ENCODE measurements at regions of chr19 and their contacts with region 1.

Region 1: GRCh38 chr19:18985257-18985656 is 44.2 kb upstream of the HOMER3 start:
- DNase-seq: peak in 1 of 2 donors; percentile 60
- ATAC-seq: no peak
- H3K4me3 ChIP-seq: no peak overlapping the region
- H3K27ac ChIP-seq: no peak overlapping the region
- H3K4me1 ChIP-seq: no peaks in the 10 kb centered on the region
- H3K27me3 ChIP-seq: no peaks in the 10 kb centered on the region

Region 2: DNA sequence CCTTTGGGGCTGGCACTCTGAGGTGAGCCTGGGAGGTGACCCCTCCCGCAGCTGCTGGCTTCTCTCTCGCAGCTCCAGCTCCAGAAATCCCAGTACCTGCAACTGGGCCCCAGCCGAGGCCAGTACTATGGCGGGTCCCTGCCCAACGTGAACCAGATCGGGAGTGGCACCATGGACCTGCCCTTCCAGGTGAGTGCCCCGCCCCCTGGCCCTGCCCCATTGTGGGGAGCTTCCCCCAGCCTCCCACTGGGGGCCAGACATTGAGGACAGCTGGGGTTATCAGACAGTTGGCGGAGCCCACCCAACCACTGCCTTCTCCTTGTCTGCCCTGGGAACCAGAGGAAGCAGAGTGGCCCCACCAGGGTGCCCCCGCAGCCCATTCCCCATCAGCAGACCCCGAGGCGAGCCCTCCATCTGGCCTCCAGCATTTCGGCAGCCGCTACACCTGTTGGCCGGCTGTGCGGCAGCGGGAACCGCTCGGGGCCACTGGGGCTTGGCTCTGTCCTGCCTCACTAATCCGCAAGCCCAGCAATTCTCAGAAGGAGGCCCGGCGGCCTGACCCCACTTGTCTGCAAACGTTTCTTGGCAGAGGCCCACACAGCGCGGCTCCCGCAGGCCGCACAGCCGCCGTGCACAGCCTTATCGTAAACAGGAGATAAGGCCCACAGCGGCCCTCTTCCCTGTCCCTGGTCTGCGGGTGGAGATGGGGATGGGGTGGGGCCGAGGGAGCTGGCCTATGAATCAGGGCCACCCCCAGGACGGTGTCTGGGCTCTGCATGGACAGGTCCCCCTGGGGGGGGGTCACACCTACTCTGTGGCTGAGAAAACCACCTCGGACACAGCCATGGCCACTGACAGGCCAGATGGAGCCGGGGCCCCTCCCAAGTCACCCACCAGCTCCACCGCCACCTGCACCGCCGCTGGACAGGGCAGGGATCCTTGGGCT is 242.1 kb before region 1 on chr19:
- intact Hi-C with region 1: no loop called
- DNase-seq: no peak
- ATAC-seq: peak; percentile 37
- H3K4me3 ChIP-seq: no peak overlapping the region
- H3K27ac ChIP-seq: no peak overlapping the region
- H3K4me1 ChIP-seq: no peaks in the 10 kb centered on the region
- H3K27me3 ChIP-seq: no peaks in the 10 kb centered on the region

Region 3: DNA sequence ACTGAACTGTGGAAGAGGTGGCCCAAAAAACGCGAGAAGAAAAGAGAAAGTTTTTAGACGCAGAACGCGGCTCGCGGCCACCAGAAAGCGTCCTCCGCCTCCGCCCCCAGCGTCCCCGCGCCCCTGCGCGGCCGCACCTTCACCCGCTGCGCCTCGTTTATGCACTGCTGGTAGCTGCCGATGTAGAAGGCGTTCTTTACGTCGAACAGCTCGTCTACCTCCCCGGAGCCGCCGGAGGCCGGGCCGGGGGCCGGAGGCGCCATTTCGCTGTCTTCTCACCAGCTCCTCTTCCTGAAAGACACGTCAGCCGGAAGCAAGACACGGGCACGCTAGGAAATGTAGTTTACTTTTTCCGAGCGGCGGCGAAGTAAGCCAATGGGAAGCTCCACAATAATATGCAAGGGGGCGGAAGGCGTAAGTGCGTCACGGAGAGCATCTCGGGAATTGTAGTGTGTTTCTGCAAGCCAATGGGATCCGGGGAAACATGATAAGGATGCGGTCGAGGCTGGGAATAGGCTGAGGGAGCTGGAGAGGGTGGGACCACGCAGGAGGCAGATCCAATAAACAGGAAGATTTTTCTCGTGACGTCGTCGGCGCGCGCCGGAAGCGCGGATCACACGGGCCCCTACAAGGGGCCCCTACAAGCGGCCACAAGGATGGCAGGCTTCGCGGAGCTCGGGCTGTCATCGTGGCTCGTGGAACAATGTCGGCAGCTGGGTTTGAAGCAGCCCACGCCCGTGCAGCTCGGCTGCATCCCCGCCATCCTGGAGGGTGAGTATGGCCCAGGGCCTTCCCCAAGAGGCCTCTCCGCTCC is 66.0 kb before region 1 on chr19 and contains the starts of genes COPE and DDX49:
- intact Hi-C with region 1: loop called in 1 of 2 experiments (anchors 1 kb)
- DNase-seq: peak; percentile 99
- ATAC-seq: peak; percentile 98
- H3K4me3 ChIP-seq: peak within 1 kb of the TSS; percentile 35 to 91
- H3K27ac ChIP-seq: peak within 1 kb of the TSS; percentile 15 to 53
- H3K4me1 ChIP-seq: no peaks in the 10 kb centered on the region
- H3K27me3 ChIP-seq: no peaks in the 10 kb centered on the region
- total RNA-seq, gene COPE: 121 to 130 TPM
- total RNA-seq, gene DDX49: 25.0 to 32.2 TPM

Region 4: GRCh38 chr19:18940769-18941407 is 44.4 kb before region 1 on chr19 and contains the start of gene HOMER3:
- intact Hi-C with region 1: loop called in 1 of 2 experiments (anchors 2 kb)
- DNase-seq: peak; percentile 86 to 96
- ATAC-seq: peak; percentile 82
- H3K4me3 ChIP-seq: peak within 1 kb of the TSS; percentile 81 to 91
- H3K27ac ChIP-seq: no peak within 1 kb of the TSS
- H3K4me1 ChIP-seq: no peaks in the 10 kb centered on the region
- H3K27me3 ChIP-seq: no peaks in the 10 kb centered on the region
- total RNA-seq, gene HOMER3: 23.6 to 29.5 TPM

Measured in aorta (tissue), 5 donors.